ENCODE measurements at regions of chr7 and their contacts with region 1.

Region 1: GRCh38 chr7:131859147-131859821 is 302.9 kb upstream of the PODXL start:
- DNase-seq: peak; percentile 60
- H3K4me3 ChIP-seq: no peak overlapping the region
- H3K27ac ChIP-seq: no peak overlapping the region
- H3K4me1 ChIP-seq: peaks cover 2% of the 10 kb centered on the region
- H3K27me3 ChIP-seq: no peaks in the 10 kb centered on the region
- CTCF ChIP-seq: peak; percentile 93

Region 2: DNA sequence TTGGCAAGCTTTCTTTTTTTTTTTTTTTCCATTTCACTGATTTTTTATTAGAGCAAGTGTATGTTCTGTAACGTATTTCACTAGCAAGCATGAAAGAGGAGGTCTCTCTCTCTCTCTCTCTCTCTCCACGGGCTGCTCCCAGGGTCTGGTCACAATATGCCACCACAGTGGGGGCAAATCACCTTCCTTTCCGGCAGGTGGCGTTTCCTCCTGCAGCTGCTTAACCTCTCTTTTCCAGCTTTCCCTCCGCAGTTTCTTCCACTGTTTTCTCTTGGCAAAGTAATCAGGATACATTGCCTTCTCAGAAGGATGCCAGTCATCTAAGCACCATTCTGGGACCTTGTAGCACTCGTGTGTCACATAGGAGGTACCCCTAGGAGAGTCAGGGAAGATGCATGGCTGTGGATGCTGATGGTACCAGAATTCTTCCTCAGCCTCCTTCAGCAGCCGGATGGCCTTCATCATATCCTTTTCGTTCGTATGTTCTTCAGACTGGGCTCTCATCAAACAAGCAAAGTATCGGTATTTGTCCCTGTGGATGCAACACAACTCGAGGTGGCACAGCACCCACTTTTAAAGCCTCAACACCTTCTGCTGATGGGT is 105.6 kb before region 1 on chr7:
- CTCF ChIA-PET with region 1: interaction called, 3 read pairs
- dilution Hi-C with region 1: no loop called
- in situ Hi-C with region 1: no loop called
- intact Hi-C with region 1: loop called (anchors 10 kb)
- DNase-seq: no peak
- H3K4me3 ChIP-seq: no peak overlapping the region
- H3K27ac ChIP-seq: no peak overlapping the region
- H3K4me1 ChIP-seq: no peaks in the 10 kb centered on the region
- H3K27me3 ChIP-seq: peaks cover 6% of the 10 kb centered on the region
- CTCF ChIP-seq: peak; percentile 36 to 78

Region 3: DNA sequence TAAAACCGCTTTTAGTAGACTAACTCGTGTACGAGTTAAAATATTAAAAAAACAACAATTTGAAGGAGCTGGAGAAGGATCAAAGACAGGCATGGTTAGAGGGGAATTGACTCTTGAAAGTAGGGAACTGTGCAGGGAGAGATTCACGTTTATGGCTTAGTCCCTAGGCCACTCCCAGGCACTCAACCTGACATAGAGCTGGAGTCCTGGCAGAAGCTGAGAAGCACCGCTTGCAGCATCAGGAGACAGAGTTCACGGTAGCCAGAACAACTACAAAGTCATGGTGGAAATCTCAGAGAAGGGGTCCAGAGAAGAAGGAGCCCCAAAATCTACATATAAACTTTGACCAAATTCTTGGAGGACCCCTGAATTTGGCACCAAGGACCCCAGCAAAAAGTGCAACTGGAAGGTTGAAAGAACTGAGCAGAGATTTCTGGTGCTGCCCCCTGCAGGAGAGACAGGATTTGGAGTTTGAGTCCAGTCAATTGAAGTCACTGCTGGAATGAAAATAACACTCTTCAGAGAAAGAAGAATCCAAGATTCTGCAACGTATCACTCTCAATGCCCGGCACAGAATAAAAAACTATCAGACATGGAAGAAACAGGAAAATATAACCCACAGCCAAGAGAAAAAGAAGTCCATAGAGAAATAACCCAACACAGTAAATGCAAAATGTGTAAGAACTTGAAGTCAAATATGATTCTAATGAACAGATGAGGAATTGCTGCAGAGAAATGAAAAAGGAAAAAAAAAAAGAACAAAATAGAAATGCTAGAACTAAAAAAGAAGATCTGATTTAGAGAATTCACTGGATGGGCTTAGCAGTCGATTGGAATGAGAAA is 190.4 kb after region 1 on chr7:
- CTCF ChIA-PET with region 1: interaction called, 4 read pairs
- dilution Hi-C with region 1: no loop called
- in situ Hi-C with region 1: no loop called
- intact Hi-C with region 1: loop called (anchors 1 kb)
- DNase-seq: no peak
- H3K4me3 ChIP-seq: peak overlapping the region in 2 of 3 experiments; percentile 5 to 6
- H3K27ac ChIP-seq: no peak overlapping the region
- H3K4me1 ChIP-seq: no peaks in the 10 kb centered on the region
- H3K27me3 ChIP-seq: no peaks in the 10 kb centered on the region
- CTCF ChIP-seq: peak; percentile 75 to 76

Region 4: DNA sequence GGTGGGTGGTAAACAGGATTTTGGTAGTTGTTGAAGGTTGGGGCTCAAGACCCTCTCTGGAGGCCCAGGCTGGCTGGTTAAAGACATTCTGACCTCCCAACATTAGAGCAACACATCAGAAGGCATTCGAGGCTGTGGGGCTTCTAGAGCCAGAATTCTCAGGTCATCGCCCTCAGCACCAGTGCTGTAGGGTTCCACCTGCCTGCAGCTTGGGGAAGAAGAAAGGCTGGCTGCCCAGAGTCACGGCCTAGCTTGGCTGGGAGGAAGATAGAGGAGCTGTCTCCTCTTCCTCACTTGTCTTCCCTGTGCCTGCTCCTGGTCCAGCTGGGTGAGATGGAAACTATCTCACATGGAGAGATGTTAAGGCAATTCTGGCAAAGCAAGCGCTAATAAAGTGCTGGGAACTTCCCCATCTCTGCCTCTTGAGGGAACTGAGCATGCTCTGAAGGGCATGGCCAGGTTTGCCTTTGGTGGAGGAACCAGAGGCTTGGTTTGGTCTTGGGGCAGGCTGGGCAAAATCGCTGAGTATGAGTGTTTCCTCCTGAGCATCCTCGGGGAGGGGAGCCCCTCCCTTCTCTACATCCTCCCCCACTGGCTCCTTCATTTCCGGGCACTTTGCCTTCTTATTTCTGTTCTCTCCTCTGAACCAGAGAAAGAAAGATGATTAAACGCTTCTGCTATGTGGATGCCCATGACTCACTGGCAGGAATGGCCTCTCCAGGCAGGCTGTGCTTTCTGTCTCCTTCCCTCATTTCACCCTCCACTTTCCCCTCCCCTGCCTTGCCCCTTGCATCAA is 206.1 kb after region 1 on chr7:
- CTCF ChIA-PET with region 1: no interaction called
- dilution Hi-C with region 1: no loop called
- in situ Hi-C with region 1: no loop called
- intact Hi-C with region 1: no loop called
- DNase-seq: peak; percentile 91
- H3K4me3 ChIP-seq: no peak overlapping the region
- H3K27ac ChIP-seq: peak overlapping the region; percentile 26
- H3K4me1 ChIP-seq: peaks cover 17% of the 10 kb centered on the region
- H3K27me3 ChIP-seq: no peaks in the 10 kb centered on the region
- CTCF ChIP-seq: no peak

Region 5: DNA sequence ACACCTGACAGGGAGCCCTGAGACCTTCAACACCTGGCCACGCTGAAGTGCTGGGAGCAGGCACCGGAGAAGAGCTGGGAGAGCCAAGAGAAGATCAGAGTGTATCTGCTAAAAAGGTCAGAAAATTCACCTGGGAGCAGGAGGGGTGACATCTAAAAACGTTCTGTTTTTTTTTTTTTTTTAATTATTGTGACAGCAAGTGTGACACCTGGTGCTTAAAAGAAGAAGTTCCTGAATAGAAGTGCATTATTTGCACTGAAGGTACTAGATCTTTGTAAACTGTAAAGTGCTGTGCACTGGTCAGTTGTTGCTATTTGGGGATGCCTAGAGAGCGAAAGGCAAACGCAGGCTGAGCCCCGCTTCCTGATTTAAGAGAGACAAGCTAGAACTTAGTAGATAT is 295.0 kb after region 1 on chr7:
- CTCF ChIA-PET with region 1: no interaction called
- dilution Hi-C with region 1: no loop called
- in situ Hi-C with region 1: no loop called
- intact Hi-C with region 1: loop called (anchors 1 kb)
- DNase-seq: no peak
- H3K4me3 ChIP-seq: no peak overlapping the region
- H3K27ac ChIP-seq: no peak overlapping the region
- H3K4me1 ChIP-seq: no peaks in the 10 kb centered on the region
- H3K27me3 ChIP-seq: no peaks in the 10 kb centered on the region
- CTCF ChIP-seq: peak; percentile 6 to 26

Region 6: GRCh38 chr7:132580717-132581285 is 721.5 kb after region 1 on chr7:
- CTCF ChIA-PET with region 1: interaction called, 4 read pairs
- dilution Hi-C with region 1: no loop called
- in situ Hi-C with region 1: no loop called
- intact Hi-C with region 1: loop called (anchors 1 kb)
- DNase-seq: peak; percentile 39
- H3K4me3 ChIP-seq: no peak overlapping the region
- H3K27ac ChIP-seq: no peak overlapping the region
- H3K4me1 ChIP-seq: peaks cover 6% of the 10 kb centered on the region
- H3K27me3 ChIP-seq: peaks cover 23% of the 10 kb centered on the region
- CTCF ChIP-seq: peak; percentile 62 to 76

Measured in mammary epithelial cell (primary cell).